Activated naive CD4-positive, alpha-beta T cell treated with anti-CD3 and anti-CD28 coated beads for 36 hours (primary cell): ENCODE measurements at regions of chr11 and their contacts with region 1.

Region 1: DNA sequence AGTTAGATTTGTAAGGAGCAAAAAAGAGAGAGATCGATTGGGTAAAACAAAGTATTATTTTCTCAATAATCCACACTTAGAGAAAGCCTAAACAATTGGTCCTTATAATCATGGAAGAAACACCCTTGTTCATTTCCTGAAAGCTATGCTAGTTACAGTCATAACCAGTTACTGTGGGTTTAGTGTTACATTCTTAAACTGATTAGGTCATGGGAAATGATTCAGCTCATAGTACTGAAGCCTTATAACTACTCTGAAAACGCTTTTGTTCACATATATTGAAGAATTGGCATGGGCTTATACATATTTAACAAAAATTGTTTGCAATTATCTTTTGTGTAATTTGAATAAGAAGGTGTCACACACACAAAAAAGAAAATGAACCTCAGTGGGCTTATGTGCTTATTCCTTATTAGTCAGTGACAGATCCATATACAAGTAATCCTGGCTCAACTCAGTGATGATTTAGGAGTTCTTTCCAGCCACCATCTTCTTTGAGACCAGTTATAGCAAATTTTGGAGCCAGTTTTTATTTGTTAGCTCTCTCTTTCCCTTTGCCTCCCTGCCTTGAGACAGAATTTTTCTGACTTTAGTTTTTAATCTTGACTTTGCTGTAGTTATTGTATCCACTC is 198.5 kb upstream of the CTSC start:
- DNase-seq: no peak
- H3K4me3 Mint-ChIP-seq: no peak overlapping the region
- H3K27ac Mint-ChIP-seq: peak overlapping the region; percentile 21
- H3K4me1 Mint-ChIP-seq: peaks cover 15% of the 10 kb centered on the region
- H3K27me3 Mint-ChIP-seq: peaks cover 9% of the 10 kb centered on the region

Region 2: GRCh38 chr11:88174709-88175568 is 361.1 kb before region 1 on chr11 and contains the start of gene RAB38:
- CTCF ChIA-PET with region 1: interaction called, 3 read pairs
- intact Hi-C with region 1: loop called (anchors 1 kb)
- DNase-seq: peak; percentile 75
- H3K4me3 Mint-ChIP-seq: peak within 1 kb of the TSS; percentile 72
- H3K27ac Mint-ChIP-seq: no peak within 1 kb of the TSS
- H3K4me1 Mint-ChIP-seq: peaks cover 31% of the 10 kb centered on the region
- H3K27me3 Mint-ChIP-seq: peaks cover 21% of the 10 kb centered on the region
- total RNA-seq, gene RAB38: 0.69 to 0.72 TPM

Region 3: DNA sequence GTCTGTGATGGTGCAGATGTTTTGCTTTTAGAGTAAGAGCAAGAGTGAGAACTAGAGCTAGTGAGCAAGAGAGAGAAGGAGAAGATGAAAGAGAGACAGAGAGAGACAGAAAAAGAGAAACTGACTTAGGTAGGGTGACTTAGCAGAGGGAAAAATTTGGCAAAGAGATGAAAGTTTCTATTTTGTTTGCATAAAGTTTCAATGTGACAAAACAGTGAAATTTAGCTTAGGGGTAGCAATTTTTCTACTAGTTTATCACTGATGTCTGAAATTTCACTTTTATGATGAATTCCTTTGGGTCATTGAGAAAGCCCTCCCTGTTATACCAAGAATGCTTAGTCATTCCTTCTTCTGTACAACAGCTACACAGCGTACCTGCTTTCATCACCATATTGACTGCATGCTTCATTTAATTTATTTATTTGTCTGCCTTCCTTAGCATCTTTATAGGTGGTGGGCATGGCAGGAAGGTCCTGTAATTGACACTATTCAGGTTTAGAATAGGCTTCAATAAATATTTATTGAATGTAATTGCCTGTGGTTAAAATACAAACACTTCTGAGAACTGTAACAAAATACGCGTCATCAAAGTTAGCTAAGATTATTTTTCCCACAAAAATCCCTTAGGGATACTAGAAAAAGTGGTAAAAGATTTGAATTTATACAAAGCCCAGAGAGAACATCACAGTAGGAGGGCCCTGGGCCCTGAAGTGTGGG is 178.6 kb before region 1 on chr11:
- CTCF ChIA-PET with region 1: no interaction called
- intact Hi-C with region 1: loop called (anchors 1 kb)
- DNase-seq: no peak
- H3K4me3 Mint-ChIP-seq: no peak overlapping the region
- H3K27ac Mint-ChIP-seq: peak overlapping the region; percentile 66
- H3K4me1 Mint-ChIP-seq: peaks cover 41% of the 10 kb centered on the region
- H3K27me3 Mint-ChIP-seq: no peaks in the 10 kb centered on the region

Region 4: GRCh38 chr11:88377144-88377543 is 158.9 kb before region 1 on chr11:
- CTCF ChIA-PET with region 1: no interaction called
- intact Hi-C with region 1: no loop called
- DNase-seq: no peak
- H3K4me3 Mint-ChIP-seq: no peak overlapping the region
- H3K27ac Mint-ChIP-seq: no peak overlapping the region
- H3K4me1 Mint-ChIP-seq: no peaks in the 10 kb centered on the region
- H3K27me3 Mint-ChIP-seq: no peaks in the 10 kb centered on the region

Region 5: GRCh38 chr11:88484873-88485621 is 51.0 kb before region 1 on chr11:
- CTCF ChIA-PET with region 1: no interaction called
- intact Hi-C with region 1: loop called (anchors 2 kb)
- DNase-seq: peak; percentile 41
- H3K4me3 Mint-ChIP-seq: no peak overlapping the region
- H3K27ac Mint-ChIP-seq: no peak overlapping the region
- H3K4me1 Mint-ChIP-seq: no peaks in the 10 kb centered on the region
- H3K27me3 Mint-ChIP-seq: no peaks in the 10 kb centered on the region

Region 6: DNA sequence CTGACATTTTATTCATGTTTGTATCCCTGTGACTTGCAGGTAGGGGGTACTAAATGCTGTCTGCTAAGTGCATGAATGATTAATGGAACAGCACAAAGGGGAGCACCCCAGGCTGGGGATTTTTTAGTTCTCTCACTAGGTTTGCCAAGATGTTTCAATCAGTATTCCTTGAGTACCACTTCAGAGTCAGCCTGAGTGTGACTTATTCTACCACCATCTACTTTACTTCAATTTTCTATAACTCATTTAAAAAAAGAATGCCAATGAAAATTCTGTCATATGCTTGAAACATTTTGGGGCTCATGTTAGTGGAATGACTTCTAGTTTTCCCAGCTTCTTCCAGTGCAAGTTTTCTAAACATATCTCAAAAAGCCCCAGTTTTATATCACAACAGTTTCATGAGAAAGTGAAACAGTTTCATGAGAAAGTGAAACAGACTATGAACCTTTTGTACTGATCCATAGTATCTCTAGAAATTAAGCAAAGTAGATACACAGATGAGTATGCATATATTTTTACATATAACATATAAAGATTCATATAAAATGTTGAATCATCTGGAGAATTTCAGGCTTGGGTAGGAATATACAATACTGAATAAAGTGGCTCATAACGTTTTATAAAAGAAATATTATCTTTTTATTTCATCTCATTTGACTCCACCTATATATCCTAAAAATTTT is 277.3 kb after region 1 on chr11:
- CTCF ChIA-PET with region 1: no interaction called
- intact Hi-C with region 1: loop called (anchors 1 kb)
- DNase-seq: peak; percentile 8
- H3K4me3 Mint-ChIP-seq: no peak overlapping the region
- H3K27ac Mint-ChIP-seq: no peak overlapping the region
- H3K4me1 Mint-ChIP-seq: peaks cover 13% of the 10 kb centered on the region
- H3K27me3 Mint-ChIP-seq: no peaks in the 10 kb centered on the region